ENCODE measurements at regions of chr16 and their contacts with region 1.

Region 1: DNA sequence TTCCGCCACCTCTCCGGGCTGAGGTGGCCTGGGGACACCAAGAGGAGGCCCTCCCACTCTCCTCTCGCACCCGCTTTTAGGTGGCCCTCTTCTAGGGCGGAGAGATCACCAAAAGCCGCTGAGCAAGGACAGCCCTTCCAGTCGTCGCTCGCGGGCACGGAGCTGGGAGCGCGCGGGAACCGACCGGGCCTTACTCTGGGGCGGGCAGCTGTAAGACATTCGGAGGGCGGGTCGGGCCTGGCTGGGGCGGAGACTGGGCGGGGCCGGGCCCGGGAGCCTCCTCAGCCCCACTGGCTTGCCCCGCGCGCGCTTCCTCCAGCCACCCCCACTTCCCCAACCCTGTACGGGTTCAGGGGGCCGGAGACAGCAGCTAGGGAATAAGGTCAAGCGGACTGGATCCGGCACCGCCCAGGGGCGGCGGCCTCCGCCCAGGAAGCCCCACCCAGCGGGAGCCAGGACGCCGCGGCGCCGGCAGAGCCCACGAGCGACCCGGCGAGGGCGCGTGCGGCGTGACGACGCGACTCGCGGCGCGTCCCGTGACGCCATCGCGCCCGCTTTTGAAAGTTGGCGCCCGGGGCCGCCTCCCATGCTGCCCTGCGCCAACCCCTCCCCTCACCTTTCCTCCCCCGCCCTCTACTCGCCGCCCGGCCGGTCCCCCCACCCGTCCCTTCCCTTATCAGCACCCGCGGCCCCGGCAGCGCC is 351 bp upstream of the CTCF start:
- DNase-seq: peak; percentile 99
- H3K4me3 Mint-ChIP-seq: peak overlapping the region; percentile 86
- H3K27ac Mint-ChIP-seq: peak overlapping the region; percentile 92
- H3K4me1 Mint-ChIP-seq: peaks cover 43% of the 10 kb centered on the region
- H3K27me3 Mint-ChIP-seq: no peaks in the 10 kb centered on the region

Region 2: DNA sequence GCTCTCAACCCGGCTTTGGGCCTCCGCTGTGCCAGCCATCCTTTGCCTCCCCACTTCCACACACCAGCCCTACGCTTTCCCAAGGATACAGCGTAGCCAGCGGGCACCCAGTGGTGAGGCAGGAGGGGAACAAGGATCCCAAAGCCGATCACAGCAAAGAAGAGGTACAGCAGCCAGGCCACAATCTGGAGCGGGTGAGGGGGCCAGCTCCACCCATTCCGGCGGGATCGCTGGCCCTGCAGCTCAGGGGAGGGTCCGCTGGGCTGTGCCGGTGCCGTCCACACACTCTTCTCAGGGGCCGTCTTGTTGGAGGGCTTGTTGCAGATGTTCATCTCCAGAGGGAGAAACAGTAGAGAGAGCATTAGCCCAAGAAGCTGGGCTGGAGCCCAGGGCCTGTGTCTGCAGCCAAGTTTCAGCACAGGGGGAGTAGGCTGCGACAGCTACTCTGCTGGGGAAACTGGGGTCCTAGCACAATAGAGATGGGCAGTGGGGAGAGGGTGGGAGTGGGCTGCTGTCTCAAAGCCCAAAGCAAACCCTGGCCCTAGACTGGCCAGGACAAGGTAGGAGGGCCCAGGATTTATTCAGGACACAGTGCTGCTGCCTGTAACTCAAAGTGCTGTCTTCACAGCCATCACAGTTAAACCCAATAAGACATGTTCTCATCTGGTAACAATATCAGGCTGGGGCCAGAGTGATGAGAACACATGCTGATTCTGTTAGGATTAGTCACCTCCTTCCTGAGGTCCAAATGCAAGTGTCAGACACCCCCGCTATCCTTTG is 155.7 kb before region 1 on chr16:
- CTCF ChIA-PET with region 1: no interaction called
- POLR2A ChIA-PET with region 1: no interaction called
- DNase-seq: no peak
- H3K4me3 Mint-ChIP-seq: no peak overlapping the region
- H3K27ac Mint-ChIP-seq: no peak overlapping the region
- H3K4me1 Mint-ChIP-seq: no peaks in the 10 kb centered on the region
- H3K27me3 Mint-ChIP-seq: peaks cover 14% of the 10 kb centered on the region

Region 3: GRCh38 chr16:67470359-67470758 is 91.6 kb before region 1 on chr16:
- CTCF ChIA-PET with region 1: no interaction called
- POLR2A ChIA-PET with region 1: no interaction called
- DNase-seq: no peak
- H3K4me3 Mint-ChIP-seq: no peak overlapping the region
- H3K27ac Mint-ChIP-seq: no peak overlapping the region
- H3K4me1 Mint-ChIP-seq: peaks cover 13% of the 10 kb centered on the region
- H3K27me3 Mint-ChIP-seq: no peaks in the 10 kb centered on the region

Region 4: DNA sequence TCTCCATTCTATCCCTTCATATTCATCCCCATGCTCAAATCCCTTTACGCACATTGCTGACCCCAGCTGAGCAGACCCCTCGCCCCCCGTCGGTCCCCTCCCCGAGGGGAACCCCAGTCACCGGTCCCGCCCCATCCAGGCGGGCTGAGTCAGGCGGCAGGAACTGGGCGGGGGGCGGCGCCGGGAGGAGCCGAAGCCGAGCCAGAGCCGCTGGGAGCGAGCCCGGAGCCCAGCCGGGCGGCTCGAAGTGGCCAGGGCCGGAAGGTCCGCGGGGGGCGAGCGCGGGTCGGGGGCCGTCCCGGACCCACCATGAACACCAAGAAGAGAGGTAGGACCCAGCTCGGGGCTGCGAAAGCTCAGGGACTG is 24.7 kb before region 1 on chr16:
- CTCF ChIA-PET with region 1: interaction called, 334 read pairs
- POLR2A ChIA-PET with region 1: interaction called, 277 read pairs
- DNase-seq: peak; percentile 61
- H3K4me3 Mint-ChIP-seq: peak overlapping the region; percentile 68
- H3K27ac Mint-ChIP-seq: peak overlapping the region; percentile 23
- H3K4me1 Mint-ChIP-seq: peaks cover 26% of the 10 kb centered on the region
- H3K27me3 Mint-ChIP-seq: peaks cover 39% of the 10 kb centered on the region

Region 5: DNA sequence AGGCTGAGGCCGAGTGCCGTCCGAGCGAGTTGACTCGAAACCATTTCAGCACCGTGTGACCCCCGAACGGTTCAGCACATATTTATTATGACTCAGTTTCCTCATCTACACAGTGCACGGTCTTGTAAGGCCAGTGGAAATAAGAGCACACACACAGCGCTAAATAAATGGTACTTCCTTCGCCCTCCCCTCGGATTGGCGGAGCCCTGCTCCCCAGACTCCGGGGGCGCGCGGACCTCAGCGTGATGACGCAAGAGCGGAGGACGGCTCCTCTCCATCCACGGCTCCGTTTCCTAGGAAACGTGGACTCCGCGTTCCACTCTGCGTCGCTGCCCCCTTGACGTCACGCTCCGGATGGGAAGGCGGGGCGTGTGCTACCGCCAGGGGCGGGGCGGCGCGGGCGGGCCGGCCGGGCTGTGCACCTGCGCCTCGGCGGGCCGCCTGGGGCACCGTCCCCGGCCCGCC is 98.6 kb after region 1 on chr16 and contains the start of gene PARD6A:
- CTCF ChIA-PET with region 1: interaction called, 10 read pairs
- POLR2A ChIA-PET with region 1: interaction called, 71 read pairs
- DNase-seq: peak; percentile 97
- H3K4me3 Mint-ChIP-seq: peak within 1 kb of the TSS; percentile 89
- H3K27ac Mint-ChIP-seq: peak within 1 kb of the TSS; percentile 96
- H3K4me1 Mint-ChIP-seq: peaks cover 35% of the 10 kb centered on the region
- H3K27me3 Mint-ChIP-seq: no peaks in the 10 kb centered on the region
- total RNA-seq, gene PARD6A: 12.2 to 14.0 TPM

Region 6: DNA sequence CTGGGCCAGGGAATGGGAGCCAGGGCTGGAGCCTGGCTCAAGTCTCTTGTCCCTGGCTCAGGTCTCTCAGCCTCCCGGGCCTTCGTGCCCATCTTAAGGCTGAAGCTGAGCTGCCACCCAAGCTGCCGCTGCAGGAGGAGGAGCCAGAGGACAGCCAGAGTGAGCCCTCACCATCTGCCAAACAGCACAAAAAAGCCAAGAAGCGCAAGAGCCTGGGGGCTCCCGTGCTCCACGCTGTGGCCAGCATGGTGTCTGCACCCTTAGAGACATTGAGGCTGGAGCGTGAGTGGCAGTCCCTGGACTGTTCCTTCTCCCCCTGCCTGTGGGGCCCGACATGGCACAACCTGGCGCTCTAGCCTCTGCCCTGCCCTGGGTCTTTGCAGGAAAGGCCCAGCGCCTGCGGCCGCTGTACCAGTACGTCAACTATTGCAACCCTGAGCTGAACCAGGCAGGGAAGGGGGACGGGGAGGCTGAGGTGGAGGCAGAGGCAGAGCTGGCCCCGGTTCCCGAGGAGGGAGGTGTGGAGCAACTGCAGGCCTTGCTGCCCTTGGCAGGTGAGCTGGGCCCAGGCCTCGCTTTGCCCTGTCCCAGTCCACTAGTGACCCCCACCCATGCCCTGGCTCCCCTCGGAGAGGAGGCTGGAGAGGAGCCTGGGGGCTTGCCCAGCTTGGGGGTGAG is 106.0 kb after region 1 on chr16:
- CTCF ChIA-PET with region 1: interaction called, 28 read pairs
- POLR2A ChIA-PET with region 1: interaction called, 12 read pairs
- DNase-seq: peak; percentile 88
- H3K4me3 Mint-ChIP-seq: peak overlapping the region; percentile 86
- H3K27ac Mint-ChIP-seq: no peak overlapping the region
- H3K4me1 Mint-ChIP-seq: peaks cover 30% of the 10 kb centered on the region
- H3K27me3 Mint-ChIP-seq: no peaks in the 10 kb centered on the region

Region 7: GRCh38 chr16:67767953-67768352 is 206.0 kb after region 1 on chr16:
- CTCF ChIA-PET with region 1: no interaction called
- POLR2A ChIA-PET with region 1: no interaction called
- DNase-seq: no peak
- H3K4me3 Mint-ChIP-seq: no peak overlapping the region
- H3K27ac Mint-ChIP-seq: no peak overlapping the region
- H3K4me1 Mint-ChIP-seq: no peaks in the 10 kb centered on the region
- H3K27me3 Mint-ChIP-seq: no peaks in the 10 kb centered on the region

Measured in activated CD4-positive, alpha-beta memory T cell treated with anti-CD3 and anti-CD28 coated beads, Interleukin-2, amount 10 ng/mL, durations not matched to agents 7 days and 5 days (primary cell).